ENCODE measurements at regions of chrX and their contacts with region 1.

Region 1: DNA sequence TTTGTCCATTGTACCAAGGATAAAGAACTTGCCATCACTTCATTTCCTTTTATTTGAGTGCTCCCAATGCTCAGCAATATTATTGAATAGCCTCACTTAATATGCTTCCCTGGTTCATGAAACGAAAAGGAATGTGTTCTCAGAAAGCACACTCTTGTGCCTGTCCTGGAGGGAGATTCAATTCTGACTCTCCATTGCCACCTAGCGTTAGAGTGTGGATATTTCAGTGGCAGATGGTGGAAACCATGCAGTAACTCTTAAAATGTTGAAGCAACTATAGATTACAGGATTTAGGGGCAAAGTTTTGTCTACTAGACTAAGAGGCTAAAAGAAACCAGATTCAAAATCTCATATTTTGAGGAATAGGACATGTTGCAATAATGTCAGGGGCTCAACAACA is 36.0 kb downstream of the GAB3 start:
- DNase-seq: peak; percentile 87
- H3K4me3 Mint-ChIP-seq: no peak overlapping the region
- H3K27ac Mint-ChIP-seq: no peak overlapping the region
- H3K4me1 Mint-ChIP-seq: peaks cover 48% of the 10 kb centered on the region
- H3K27me3 Mint-ChIP-seq: no peaks in the 10 kb centered on the region

Region 2: GRCh38 chrX:154724993-154725756 is 10.2 kb after region 1 on chrX:
- intact Hi-C with region 1: loop called (anchors 1 kb)
- DNase-seq: peak; percentile 57
- H3K4me3 Mint-ChIP-seq: peak overlapping the region; percentile 54
- H3K27ac Mint-ChIP-seq: peak overlapping the region; percentile 88
- H3K4me1 Mint-ChIP-seq: peaks cover 56% of the 10 kb centered on the region
- H3K27me3 Mint-ChIP-seq: no peaks in the 10 kb centered on the region

Region 3: DNA sequence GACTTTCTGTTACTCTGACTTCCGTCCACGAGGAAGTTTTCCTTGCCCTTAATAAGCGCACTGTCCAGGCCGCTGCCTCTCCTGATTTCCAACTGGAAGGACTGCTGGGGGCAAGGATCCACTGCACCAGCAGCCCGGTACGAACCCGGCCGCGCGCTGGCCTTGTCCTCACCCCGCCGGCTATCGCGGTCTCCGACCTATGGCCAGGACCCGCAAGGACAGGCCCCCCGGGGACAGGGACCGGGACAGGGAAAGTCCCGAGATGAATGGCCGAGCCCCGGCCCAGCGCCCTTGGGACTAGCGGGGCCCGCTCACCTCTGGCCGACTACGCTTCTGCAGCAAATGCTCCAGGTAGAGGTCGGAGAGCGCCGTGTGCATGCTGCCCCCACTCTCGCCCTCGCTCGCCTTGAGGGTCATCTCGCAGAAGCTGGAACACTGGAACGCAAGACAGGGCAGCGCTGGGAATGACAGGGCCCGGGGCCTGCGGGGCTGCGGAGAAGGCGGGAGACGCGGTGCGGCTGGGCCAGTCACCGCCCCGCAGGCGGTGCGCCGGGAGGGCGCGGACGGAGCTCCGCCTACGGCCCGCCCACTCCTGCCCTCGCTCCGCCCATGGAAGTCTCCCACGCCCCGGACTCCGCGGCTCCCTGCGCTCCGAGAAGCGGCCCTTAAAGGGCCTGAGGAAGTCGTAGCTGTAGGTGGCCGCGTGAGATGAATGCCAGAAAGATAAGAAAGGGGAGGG is 90.2 kb after region 1 on chrX and contains the start of gene MPP1:
- intact Hi-C with region 1: loop called (anchors 5 kb)
- DNase-seq: peak; percentile 95
- H3K4me3 Mint-ChIP-seq: peak within 1 kb of the TSS; percentile 89
- H3K27ac Mint-ChIP-seq: peak within 1 kb of the TSS; percentile 74
- H3K4me1 Mint-ChIP-seq: peaks cover 39% of the 10 kb centered on the region
- H3K27me3 Mint-ChIP-seq: no peaks in the 10 kb centered on the region
- total RNA-seq, gene MPP1: 22.4 and 25.6 TPM in 2 replicates

Measured in activated CD4-positive, alpha-beta T cell treated with anti-CD3 and anti-CD28 coated beads, Interleukin-2, amount 10 ng/mL, durations not matched to agents 24 days and 14 days (primary cell).